Body of pancreas (tissue), 4 donors: ENCODE measurements at regions of chr1 and their contacts with region 1.

Region 1: DNA sequence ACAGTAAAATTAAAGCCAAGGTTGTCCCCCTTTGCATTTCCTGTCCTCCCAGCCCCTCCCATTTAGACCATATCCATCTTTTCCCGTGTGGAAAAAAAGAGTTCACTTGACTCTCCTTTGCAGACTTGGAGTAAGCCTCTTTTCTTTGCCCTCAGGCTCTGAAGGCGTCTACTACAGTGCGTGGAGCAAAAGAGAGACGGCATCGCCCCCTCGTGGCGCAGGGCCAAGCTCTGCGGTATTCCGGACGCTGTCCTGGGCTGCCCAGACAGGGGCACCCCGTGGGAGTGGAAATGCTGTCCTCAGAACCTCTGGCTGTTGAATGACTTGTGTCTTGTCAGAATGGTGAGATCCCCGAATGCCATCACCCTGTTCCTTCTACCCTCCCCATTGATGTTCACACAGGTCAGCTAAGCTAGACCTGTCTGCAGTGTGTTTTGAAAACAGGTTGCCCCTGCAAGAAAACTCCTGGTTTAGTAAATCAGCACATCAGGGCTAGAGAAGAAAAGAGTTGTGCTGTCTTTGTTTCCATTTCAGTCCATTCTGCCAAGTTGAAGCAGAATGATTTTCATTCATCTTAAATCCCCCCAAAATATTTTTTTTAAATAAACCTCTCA is 12.3 kb upstream of the GJA8 start:
- DNase-seq: peak; percentile 19 to 65 (median 45)
- ATAC-seq: no peak
- H3K4me3 ChIP-seq: no peak overlapping the region
- H3K27ac ChIP-seq: no peak overlapping the region
- H3K4me1 ChIP-seq: no peaks in the 10 kb centered on the region
- H3K27me3 ChIP-seq: no peaks in the 10 kb centered on the region
- CTCF ChIP-seq: peak in 4 of 7 experiments; percentile 13 to 44 (median 28)
- POLR2A ChIP-seq: no peak

Region 2: DNA sequence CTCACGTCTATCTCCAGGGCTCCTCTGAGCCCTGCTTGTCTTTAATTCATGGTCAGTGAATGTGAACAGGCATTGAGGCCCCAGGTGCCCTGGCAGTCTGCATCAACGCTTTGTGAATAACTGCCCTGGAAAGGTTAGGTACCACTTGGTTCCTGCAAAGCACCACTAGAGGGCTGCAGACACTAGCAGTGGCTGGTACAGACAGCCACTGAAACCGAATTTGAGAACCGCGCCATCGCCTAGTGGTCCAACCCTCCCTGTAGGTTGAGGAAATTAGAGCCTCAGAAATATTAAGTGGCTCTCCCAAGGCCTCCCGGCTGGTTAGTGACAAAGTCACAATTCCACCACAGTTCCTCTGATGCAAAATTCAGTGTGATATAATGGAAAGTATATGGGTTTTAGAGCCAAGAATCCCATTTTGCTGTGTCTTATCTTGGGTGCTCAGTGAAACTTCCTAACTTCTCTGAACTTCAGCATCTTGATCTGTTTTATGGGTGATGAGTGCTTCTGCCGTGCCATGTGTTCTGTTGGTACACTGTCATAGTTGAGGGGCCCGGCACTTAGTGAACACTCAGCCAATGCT is 395.2 kb before region 1 on chr1:
- intact Hi-C with region 1: loop called (anchors 10 kb)
- DNase-seq: peak; percentile 62 to 76 (median 74)
- ATAC-seq: peak; percentile 82
- H3K4me3 ChIP-seq: no peak overlapping the region
- H3K27ac ChIP-seq: no peak overlapping the region
- H3K4me1 ChIP-seq: no peaks in the 10 kb centered on the region
- H3K27me3 ChIP-seq: no peaks in the 10 kb centered on the region
- CTCF ChIP-seq: peak; percentile 68 to 88 (median 80)
- POLR2A ChIP-seq: no peak

Region 3: DNA sequence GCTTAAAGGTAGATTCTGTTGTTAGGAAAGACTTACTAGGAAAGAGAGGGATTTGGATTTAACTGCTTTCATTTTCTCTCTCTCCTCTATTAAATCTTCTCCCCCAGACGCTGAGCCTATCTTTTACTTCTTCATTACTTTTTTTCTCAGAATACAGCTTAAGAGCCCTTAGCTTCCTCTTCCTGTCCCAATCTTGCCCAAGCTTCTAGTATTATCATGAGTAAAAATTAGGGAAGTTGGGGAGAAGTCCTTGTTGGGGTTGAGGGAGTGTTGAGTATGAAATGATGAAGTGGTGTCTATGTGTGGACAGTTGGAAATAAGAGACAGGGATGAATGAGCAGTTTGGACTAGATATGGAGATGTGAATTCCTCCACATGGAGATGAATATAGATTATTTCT is 254.9 kb before region 1 on chr1:
- intact Hi-C with region 1: loop called (anchors 5 kb)
- DNase-seq: no peak
- ATAC-seq: no peak
- H3K4me3 ChIP-seq: no peak overlapping the region
- H3K27ac ChIP-seq: peak overlapping the region in 1 of 4 donors; percentile 15
- H3K4me1 ChIP-seq: no peaks in the 10 kb centered on the region
- H3K27me3 ChIP-seq: no peaks in the 10 kb centered on the region
- CTCF ChIP-seq: no peak
- POLR2A ChIP-seq: no peak

Region 4: GRCh38 chr1:147723691-147724323 is 166.5 kb before region 1 on chr1:
- intact Hi-C with region 1: loop called (anchors 10 kb)
- DNase-seq: peak; percentile 26 to 49 (median 30)
- ATAC-seq: peak; percentile 38
- H3K4me3 ChIP-seq: no peak overlapping the region
- H3K27ac ChIP-seq: no peak overlapping the region
- H3K4me1 ChIP-seq: peaks cover 13% of the 10 kb centered on the region
- H3K27me3 ChIP-seq: no peaks in the 10 kb centered on the region
- CTCF ChIP-seq: peak in 6 of 7 experiments; percentile 5 to 54 (median 46)
- POLR2A ChIP-seq: no peak